ENCODE measurements at regions of chr6 and their contacts with region 1.

Region 1: GRCh38 chr6:11366183-11366933 is 133.9 kb upstream of the NEDD9 start:
- DNase-seq: peak; percentile 11
- H3K4me3 ChIP-seq: no peak overlapping the region
- H3K27ac ChIP-seq: peak overlapping the region; percentile 58
- H3K4me1 ChIP-seq: peaks cover 51% of the 10 kb centered on the region
- H3K27me3 ChIP-seq: no peaks in the 10 kb centered on the region
- CTCF ChIP-seq: no peak
- POLR2A ChIP-seq: no peak

Region 2: GRCh38 chr6:11218538-11219399 is 147.6 kb before region 1 on chr6:
- CTCF ChIA-PET with region 1: no interaction called
- POLR2A ChIA-PET with region 1: no interaction called
- dilution Hi-C with region 1: no loop called
- intact Hi-C with region 1: loop called (anchors 1 kb)
- DNase-seq: peak; percentile 96
- H3K4me3 ChIP-seq: peak overlapping the region in 1 of 3 experiments; percentile 1
- H3K27ac ChIP-seq: peak overlapping the region; percentile 91
- H3K4me1 ChIP-seq: peaks cover 96% of the 10 kb centered on the region
- H3K27me3 ChIP-seq: no peaks in the 10 kb centered on the region
- CTCF ChIP-seq: no peak
- POLR2A ChIP-seq: peak; percentile 78

Region 3: DNA sequence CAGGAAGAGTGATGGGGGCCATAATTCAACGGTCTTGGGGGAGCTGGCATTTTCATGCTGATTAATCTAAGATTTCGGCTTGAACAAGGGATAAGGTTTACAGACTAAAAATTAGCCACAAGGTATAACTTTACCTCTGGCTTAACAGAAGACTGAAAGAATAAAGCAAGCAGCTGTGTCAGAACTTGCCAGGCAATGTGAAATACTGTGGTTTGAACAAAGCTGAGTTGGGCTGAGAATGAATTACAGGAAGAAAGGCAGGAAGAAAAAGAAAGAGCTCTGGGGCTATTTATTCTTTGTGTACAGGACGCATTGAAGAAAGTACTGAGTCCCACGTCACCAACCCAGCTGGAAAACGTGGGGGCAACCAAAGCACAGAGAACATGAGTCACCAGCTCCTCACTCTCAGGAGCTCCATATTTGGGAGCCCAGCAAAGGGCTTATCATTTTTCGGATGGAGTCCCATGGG is 12.4 kb before region 1 on chr6:
- CTCF ChIA-PET with region 1: interaction called, 8 read pairs
- POLR2A ChIA-PET with region 1: interaction called, 11 read pairs
- dilution Hi-C with region 1: no loop called
- intact Hi-C with region 1: loop called (anchors 1 kb)
- DNase-seq: peak; percentile 94
- H3K4me3 ChIP-seq: peak overlapping the region in 1 of 3 experiments; percentile 7
- H3K27ac ChIP-seq: peak overlapping the region; percentile 97
- H3K4me1 ChIP-seq: peaks cover 31% of the 10 kb centered on the region
- H3K27me3 ChIP-seq: no peaks in the 10 kb centered on the region
- CTCF ChIP-seq: no peak
- POLR2A ChIP-seq: no peak

Region 4: GRCh38 chr6:11414176-11414963 is 48.0 kb after region 1 on chr6:
- CTCF ChIA-PET with region 1: no interaction called
- POLR2A ChIA-PET with region 1: no interaction called
- dilution Hi-C with region 1: no loop called
- intact Hi-C with region 1: loop called (anchors 1 kb)
- DNase-seq: peak; percentile 43
- H3K4me3 ChIP-seq: no peak overlapping the region
- H3K27ac ChIP-seq: no peak overlapping the region
- H3K4me1 ChIP-seq: peaks cover 35% of the 10 kb centered on the region
- H3K27me3 ChIP-seq: no peaks in the 10 kb centered on the region
- CTCF ChIP-seq: no peak
- POLR2A ChIP-seq: no peak

Region 5: DNA sequence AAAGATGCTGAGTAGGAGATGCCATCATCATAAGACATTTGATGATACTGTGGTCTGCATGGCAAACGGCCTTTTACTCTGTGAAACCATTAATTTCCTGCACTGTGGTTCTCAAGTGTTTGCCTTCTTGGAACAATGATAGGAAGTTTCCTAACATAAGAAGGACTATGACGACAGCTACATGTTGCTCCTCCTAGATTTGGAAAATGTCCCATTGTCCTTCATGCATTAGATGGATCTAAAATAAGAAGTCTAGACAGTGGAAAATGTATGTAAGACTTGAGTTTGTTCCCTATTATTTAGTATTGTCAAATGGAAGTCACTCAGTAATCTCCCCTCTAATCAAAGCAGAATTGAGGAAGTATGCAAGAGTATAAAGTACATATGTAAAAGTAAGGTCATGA is 72.7 kb after region 1 on chr6:
- CTCF ChIA-PET with region 1: no interaction called
- POLR2A ChIA-PET with region 1: no interaction called
- dilution Hi-C with region 1: no loop called
- intact Hi-C with region 1: loop called (anchors 2 kb)
- DNase-seq: peak; percentile 91
- H3K4me3 ChIP-seq: no peak overlapping the region
- H3K27ac ChIP-seq: peak overlapping the region; percentile 56
- H3K4me1 ChIP-seq: peaks cover 19% of the 10 kb centered on the region
- H3K27me3 ChIP-seq: no peaks in the 10 kb centered on the region
- CTCF ChIP-seq: no peak
- POLR2A ChIP-seq: no peak